MCF 10A (cell line): ENCODE measurements at regions of chr14 and their contacts with region 1.

Region 1: GRCh38 chr14:50003213-50004031 is 110.5 kb downstream of the ARF6 start:
- DNase-seq: peak; percentile 72
- H3K4me3 Mint-ChIP-seq: peak overlapping the region; percentile 73
- H3K27ac Mint-ChIP-seq: peak overlapping the region; percentile 95
- H3K4me1 Mint-ChIP-seq: peaks cover 45% of the 10 kb centered on the region
- H3K27me3 Mint-ChIP-seq: no peaks in the 10 kb centered on the region
- CTCF ChIP-seq: no peak

Region 2: GRCh38 chr14:48954446-48954845 is 1049.0 kb before region 1 on chr14:
- CTCF ChIA-PET with region 1: no interaction called
- POLR2A ChIA-PET with region 1: no interaction called
- intact Hi-C with region 1: no loop called
- DNase-seq: no peak
- H3K4me3 Mint-ChIP-seq: no peak overlapping the region
- H3K27ac Mint-ChIP-seq: no peak overlapping the region
- H3K4me1 Mint-ChIP-seq: no peaks in the 10 kb centered on the region
- H3K27me3 Mint-ChIP-seq: no peaks in the 10 kb centered on the region
- CTCF ChIP-seq: no peak

Region 3: DNA sequence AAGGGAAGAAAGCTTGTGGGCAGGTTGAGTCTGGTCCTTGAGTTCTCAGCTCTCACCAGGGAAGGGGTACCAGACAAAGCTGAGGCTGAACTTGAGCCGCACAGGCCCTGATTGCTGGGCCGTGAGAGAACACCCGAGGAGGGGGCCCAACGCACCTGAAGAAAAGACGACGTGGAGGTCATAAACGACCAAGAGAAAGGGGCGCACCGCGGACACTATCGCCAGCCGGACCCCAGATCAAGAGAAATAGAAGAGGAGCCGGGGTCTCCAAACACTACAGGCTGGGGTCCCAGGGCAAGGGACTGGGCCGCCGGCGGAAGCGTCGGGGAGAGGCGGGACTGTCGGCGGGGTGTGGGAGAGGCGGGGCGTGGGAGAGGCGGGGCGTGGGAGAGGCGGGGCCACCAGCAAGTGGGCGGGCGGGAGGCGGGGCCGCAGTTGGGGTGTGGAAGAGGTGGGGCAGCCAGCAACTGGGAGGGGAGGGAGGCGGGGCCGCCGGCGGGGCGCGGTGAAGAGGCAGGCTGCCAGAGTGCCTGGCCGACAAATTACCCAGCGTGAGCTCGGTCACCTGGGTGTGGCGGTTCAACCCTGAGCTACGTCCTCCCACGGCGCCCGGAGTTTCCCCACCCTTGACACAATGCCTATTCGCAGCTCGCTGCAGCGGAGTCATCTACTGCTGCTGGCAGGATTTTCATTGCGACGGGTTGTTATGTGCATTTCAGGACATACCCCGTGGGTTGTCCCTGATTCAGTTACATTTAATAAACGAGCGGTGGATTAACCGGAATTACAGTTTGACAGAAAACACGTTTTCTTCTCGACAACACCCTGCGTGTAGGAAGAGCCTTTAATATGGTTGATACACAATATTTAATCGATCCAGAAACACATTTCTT is 135.3 kb before region 1 on chr14:
- CTCF ChIA-PET with region 1: interaction called, 33 read pairs
- POLR2A ChIA-PET with region 1: interaction called, 176 read pairs
- intact Hi-C with region 1: loop called (anchors 1 kb)
- DNase-seq: peak; percentile 95
- H3K4me3 Mint-ChIP-seq: peak overlapping the region; percentile 96
- H3K27ac Mint-ChIP-seq: peak overlapping the region; percentile 99
- H3K4me1 Mint-ChIP-seq: peaks cover 11% of the 10 kb centered on the region
- H3K27me3 Mint-ChIP-seq: no peaks in the 10 kb centered on the region
- CTCF ChIP-seq: no peak

Region 4: DNA sequence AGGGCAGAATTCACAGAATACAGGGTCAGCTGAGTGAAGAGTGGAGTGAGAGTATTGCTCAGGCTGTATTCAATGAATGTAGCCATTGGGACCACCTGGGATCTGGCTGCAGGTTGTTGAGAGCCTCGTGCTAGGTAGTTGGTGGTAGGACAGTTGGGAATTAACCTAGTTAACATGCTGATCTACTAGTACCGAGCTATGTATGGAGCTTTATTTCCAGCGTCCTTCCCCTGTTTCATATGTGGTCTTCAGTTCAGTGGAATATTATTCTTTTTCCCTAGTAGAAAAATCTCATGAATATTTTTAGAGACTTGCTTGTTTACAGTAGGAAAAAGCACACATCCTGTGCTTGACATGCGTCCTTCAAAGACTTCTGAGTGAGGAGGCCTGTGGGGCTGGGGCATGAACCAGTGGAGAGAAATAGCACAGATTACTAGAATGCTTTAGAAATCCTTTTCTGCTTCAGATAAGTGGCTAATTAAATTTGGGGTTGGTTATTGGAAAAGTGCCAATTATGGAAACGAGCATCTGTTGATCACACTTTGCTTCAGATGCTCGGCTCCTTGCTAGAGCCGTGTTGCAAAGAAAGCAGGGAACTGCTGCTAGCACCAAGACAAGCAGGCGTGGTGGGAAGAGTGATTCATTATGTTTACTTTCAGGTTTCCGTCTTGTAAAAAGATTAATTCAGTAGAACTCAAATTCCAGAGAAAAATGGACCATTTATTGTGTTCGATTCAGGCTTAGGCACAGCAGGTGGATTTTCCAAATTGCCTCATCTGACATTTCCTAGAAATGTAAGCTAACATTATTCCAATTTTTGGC is 56.9 kb before region 1 on chr14:
- CTCF ChIA-PET with region 1: interaction called, 11 read pairs
- POLR2A ChIA-PET with region 1: interaction called, 222 read pairs
- intact Hi-C with region 1: no loop called
- DNase-seq: peak; percentile 72
- H3K4me3 Mint-ChIP-seq: peak overlapping the region; percentile 42
- H3K27ac Mint-ChIP-seq: peak overlapping the region; percentile 81
- H3K4me1 Mint-ChIP-seq: peaks cover 38% of the 10 kb centered on the region
- H3K27me3 Mint-ChIP-seq: no peaks in the 10 kb centered on the region
- CTCF ChIP-seq: no peak

Region 5: GRCh38 chr14:49977126-49977841 is 26.1 kb before region 1 on chr14:
- CTCF ChIA-PET with region 1: interaction called, 36 read pairs
- POLR2A ChIA-PET with region 1: interaction called, 187 read pairs
- intact Hi-C with region 1: loop called (anchors 1 kb)
- DNase-seq: no peak
- H3K4me3 Mint-ChIP-seq: no peak overlapping the region
- H3K27ac Mint-ChIP-seq: no peak overlapping the region
- H3K4me1 Mint-ChIP-seq: peaks cover 23% of the 10 kb centered on the region
- H3K27me3 Mint-ChIP-seq: no peaks in the 10 kb centered on the region
- CTCF ChIP-seq: no peak

Region 6: GRCh38 chr14:50060871-50061663 is 57.6 kb after region 1 on chr14:
- CTCF ChIA-PET with region 1: interaction called, 8 read pairs
- POLR2A ChIA-PET with region 1: interaction called, 17 read pairs
- intact Hi-C with region 1: loop called (anchors 2 kb)
- DNase-seq: peak; percentile 96
- H3K4me3 Mint-ChIP-seq: no peak overlapping the region
- H3K27ac Mint-ChIP-seq: peak overlapping the region; percentile 84
- H3K4me1 Mint-ChIP-seq: peaks cover 20% of the 10 kb centered on the region
- H3K27me3 Mint-ChIP-seq: no peaks in the 10 kb centered on the region
- CTCF ChIP-seq: no peak

Region 7: DNA sequence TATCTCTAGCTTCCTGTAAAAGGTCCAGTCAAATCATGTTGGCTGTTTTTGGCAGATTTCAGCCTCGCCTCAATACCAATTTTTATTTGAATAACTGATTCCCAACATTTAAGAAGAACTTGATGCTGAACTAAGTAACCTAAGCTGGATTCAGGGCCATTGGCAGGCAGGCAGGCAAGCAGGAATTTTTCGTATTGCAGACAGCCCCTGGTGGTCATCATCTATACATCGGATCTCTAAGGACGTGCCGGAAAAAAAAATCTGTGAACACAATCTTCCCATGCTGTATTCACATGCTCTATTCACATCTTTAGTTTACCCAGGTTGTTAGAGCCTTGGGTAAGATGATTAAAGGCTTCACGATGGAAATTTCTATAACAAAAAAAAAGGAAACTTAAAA is 105.9 kb after region 1 on chr14:
- CTCF ChIA-PET with region 1: interaction called, 5 read pairs
- POLR2A ChIA-PET with region 1: interaction called, 11 read pairs
- intact Hi-C with region 1: no loop called
- DNase-seq: no peak
- H3K4me3 Mint-ChIP-seq: no peak overlapping the region
- H3K27ac Mint-ChIP-seq: no peak overlapping the region
- H3K4me1 Mint-ChIP-seq: no peaks in the 10 kb centered on the region
- H3K27me3 Mint-ChIP-seq: no peaks in the 10 kb centered on the region
- CTCF ChIP-seq: peak; percentile 14

Region 8: GRCh38 chr14:50520947-50521815 is 517.8 kb after region 1 on chr14:
- CTCF ChIA-PET with region 1: no interaction called
- POLR2A ChIA-PET with region 1: no interaction called
- intact Hi-C with region 1: no loop called
- DNase-seq: peak; percentile 86
- H3K4me3 Mint-ChIP-seq: peak overlapping the region; percentile 35
- H3K27ac Mint-ChIP-seq: peak overlapping the region; percentile 76
- H3K4me1 Mint-ChIP-seq: peaks cover 36% of the 10 kb centered on the region
- H3K27me3 Mint-ChIP-seq: no peaks in the 10 kb centered on the region
- CTCF ChIP-seq: no peak